ENCODE measurements at regions of chr17 and their contacts with region 1.

Region 1: DNA sequence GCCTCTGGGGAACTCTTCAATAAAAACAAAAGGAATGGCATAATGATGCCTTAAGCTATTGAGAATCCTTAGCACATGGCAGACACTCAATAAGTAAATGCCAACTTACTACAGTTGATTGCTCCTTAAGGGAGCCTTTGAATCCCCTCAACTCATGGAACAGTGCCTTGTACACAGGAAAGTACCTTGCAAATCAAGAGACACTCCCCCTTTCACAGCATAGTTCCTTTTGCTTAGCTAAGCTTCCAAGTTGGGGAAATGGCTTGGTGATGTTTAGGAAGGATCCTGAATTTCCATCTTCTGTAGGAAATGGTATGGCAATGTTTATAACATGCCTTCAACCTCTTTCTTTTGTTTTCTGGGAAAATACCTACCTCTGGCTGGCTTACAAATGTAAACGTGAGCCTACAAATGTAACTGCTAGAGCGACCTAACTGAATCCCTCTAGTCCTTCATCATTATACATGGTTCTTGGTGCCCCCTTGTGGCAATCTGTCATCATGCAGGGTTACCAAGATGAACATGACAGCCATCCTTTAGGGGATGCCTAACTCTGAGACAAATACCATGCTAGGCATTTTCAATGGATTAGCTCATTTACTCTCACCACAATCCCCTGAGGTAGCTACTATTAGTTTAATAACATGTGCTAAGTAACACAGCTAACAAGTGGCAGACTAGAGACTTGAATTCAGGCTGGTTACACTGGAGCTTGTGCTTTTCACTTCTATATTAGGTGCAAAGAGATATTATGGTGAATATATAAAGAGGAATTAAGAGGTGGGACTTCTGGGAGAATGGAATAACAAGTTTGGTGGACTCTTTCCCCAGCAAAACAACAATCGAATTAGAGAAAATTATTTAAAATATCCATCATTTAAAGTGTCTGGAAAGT is 65.0 kb downstream of the MMD start:
- DNase-seq: no peak
- H3K4me3 ChIP-seq: no peak overlapping the region
- H3K27me3 ChIP-seq: no peaks in the 10 kb centered on the region
- CTCF ChIP-seq: peak; percentile 86

Region 2: DNA sequence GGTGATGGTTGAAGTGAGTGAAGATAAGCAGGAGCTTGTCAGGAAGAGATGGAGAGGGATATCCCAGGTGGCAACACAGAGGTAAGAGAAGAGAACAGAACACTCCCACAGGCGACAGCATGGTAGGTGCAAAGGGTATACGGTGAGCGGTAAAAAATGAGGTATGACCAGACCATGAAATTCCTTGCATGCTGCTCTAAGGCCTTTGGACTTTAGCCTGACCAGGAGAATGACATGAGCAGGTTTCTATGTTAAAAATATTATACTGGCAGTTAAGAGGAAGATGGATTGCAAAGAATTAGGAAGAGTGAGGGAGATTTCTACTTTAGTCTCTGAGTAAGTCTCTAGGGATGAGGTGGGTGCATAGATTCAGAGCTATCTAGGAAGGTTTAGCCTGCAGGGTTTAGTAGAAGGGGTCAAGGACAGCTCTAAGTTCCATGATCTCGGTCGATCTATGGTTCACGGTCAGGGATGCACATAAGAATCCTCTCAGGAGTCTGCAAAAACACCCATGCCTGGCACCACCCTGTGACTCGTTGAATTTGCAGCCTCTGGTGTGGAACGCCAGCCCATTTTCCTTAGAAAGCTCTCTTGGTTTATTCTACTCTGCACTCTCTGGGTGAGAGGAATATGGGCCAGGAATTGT is 26.2 kb before region 1 on chr17:
- CTCF ChIA-PET with region 1: interaction called, 14 read pairs
- POLR2A ChIA-PET with region 1: no interaction called
- DNase-seq: no peak
- H3K4me3 ChIP-seq: no peak overlapping the region
- H3K27me3 ChIP-seq: no peaks in the 10 kb centered on the region
- CTCF ChIP-seq: no peak

Region 3: GRCh38 chr17:55496094-55496881 is 139.6 kb after region 1 on chr17:
- CTCF ChIA-PET with region 1: interaction called, 3 read pairs
- POLR2A ChIA-PET with region 1: interaction called, 16 read pairs
- DNase-seq: no peak
- H3K4me3 ChIP-seq: no peak overlapping the region
- H3K27me3 ChIP-seq: no peaks in the 10 kb centered on the region; the same call in 1 of the 2 replicates
- CTCF ChIP-seq: no peak

Region 4: GRCh38 chr17:55513885-55514591 is 157.4 kb after region 1 on chr17:
- CTCF ChIA-PET with region 1: interaction called, 39 read pairs
- POLR2A ChIA-PET with region 1: interaction called, 3 read pairs
- DNase-seq: no peak
- H3K4me3 ChIP-seq: no peak overlapping the region
- H3K27me3 ChIP-seq: no peaks in the 10 kb centered on the region
- CTCF ChIP-seq: peak; percentile 94